GM23248 (cell line): ENCODE measurements at regions of chr1 and their contacts with region 1.

Region 1: GRCh38 chr1:108816049-108816893 is 40.6 kb downstream of the AKNAD1 start:
- DNase-seq: peak; percentile 96
- H3K4me3 ChIP-seq: peak overlapping the region; percentile 60
- H3K27ac ChIP-seq: peak overlapping the region; percentile 99
- H3K4me1 ChIP-seq: peaks cover 25% of the 10 kb centered on the region
- H3K27me3 ChIP-seq: no peaks in the 10 kb centered on the region

Region 2: GRCh38 chr1:108686614-108687313 is 129.5 kb before region 1 on chr1:
- in situ Hi-C with region 1: no loop called
- DNase-seq: peak; percentile 45
- H3K4me3 ChIP-seq: no peak overlapping the region
- H3K27ac ChIP-seq: no peak overlapping the region
- H3K4me1 ChIP-seq: peaks cover 14% of the 10 kb centered on the region; the same call in 1 of the 2 replicates
- H3K27me3 ChIP-seq: no peaks in the 10 kb centered on the region

Region 3: GRCh38 chr1:108892356-108893140 is 76.3 kb after region 1 on chr1:
- in situ Hi-C with region 1: loop called (anchors 5 kb)
- DNase-seq: peak; percentile 57
- H3K4me3 ChIP-seq: no peak overlapping the region
- H3K27ac ChIP-seq: no peak overlapping the region
- H3K4me1 ChIP-seq: peaks cover 25% of the 10 kb centered on the region
- H3K27me3 ChIP-seq: no peaks in the 10 kb centered on the region